Activated naive CD4-positive, alpha-beta T cell treated with anti-CD3 and anti-CD28 coated beads for 36 hours (primary cell): ENCODE measurements at regions of chr3 and their contacts with region 1.

Region 1: GRCh38 chr3:44338010-44338827 is at the start of gene TCAIM:
- DNase-seq: peak; percentile 98
- H3K4me3 Mint-ChIP-seq: peak within 1 kb of the TSS; percentile 99
- H3K27ac Mint-ChIP-seq: peak within 1 kb of the TSS; percentile 98
- H3K4me1 Mint-ChIP-seq: peaks cover 17% of the 10 kb centered on the region
- H3K27me3 Mint-ChIP-seq: no peaks in the 10 kb centered on the region
- total RNA-seq, gene TCAIM: 14.0 to 15.9 TPM

Region 2: GRCh38 chr3:43690400-43691119 is 647.7 kb before region 1 on chr3 and contains the start of gene ABHD5:
- CTCF ChIA-PET with region 1: no interaction called
- intact Hi-C with region 1: loop called (anchors 2 kb)
- DNase-seq: peak; percentile 85
- H3K4me3 Mint-ChIP-seq: peak within 1 kb of the TSS; percentile 83
- H3K27ac Mint-ChIP-seq: peak within 1 kb of the TSS; percentile 85
- H3K4me1 Mint-ChIP-seq: peaks cover 31% of the 10 kb centered on the region
- H3K27me3 Mint-ChIP-seq: no peaks in the 10 kb centered on the region
- total RNA-seq, gene ABHD5: 9.4 to 11.0 TPM

Region 3: DNA sequence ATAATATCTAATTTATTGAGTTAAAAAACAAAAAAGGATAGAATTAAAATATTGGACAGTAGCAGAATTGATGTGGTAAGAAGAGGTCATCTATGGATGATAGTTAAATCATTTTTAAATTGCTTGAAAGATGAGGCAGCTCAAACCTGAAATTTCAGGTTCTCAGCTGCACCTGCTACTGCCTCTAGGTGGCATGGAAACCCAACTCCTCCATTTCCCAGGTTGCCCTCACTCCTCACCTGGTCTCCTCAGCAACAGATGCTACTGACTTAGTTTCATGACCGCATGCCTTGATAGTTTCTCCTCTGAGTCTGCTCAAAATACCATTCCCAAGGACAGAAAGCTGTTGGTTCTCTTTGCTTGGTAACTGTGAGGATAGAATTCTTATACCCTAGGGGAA is 499.3 kb before region 1 on chr3:
- CTCF ChIA-PET with region 1: no interaction called
- intact Hi-C with region 1: no loop called
- DNase-seq: no peak
- H3K4me3 Mint-ChIP-seq: no peak overlapping the region
- H3K27ac Mint-ChIP-seq: no peak overlapping the region
- H3K4me1 Mint-ChIP-seq: no peaks in the 10 kb centered on the region
- H3K27me3 Mint-ChIP-seq: peaks cover 17% of the 10 kb centered on the region

Region 4: GRCh38 chr3:44375450-44375849 is 37.2 kb after region 1 on chr3:
- CTCF ChIA-PET with region 1: no interaction called
- intact Hi-C with region 1: no loop called
- DNase-seq: no peak
- H3K4me3 Mint-ChIP-seq: no peak overlapping the region
- H3K27ac Mint-ChIP-seq: no peak overlapping the region
- H3K4me1 Mint-ChIP-seq: no peaks in the 10 kb centered on the region
- H3K27me3 Mint-ChIP-seq: no peaks in the 10 kb centered on the region

Region 5: GRCh38 chr3:44439499-44440295 is 101.5 kb after region 1 on chr3:
- CTCF ChIA-PET with region 1: no interaction called
- intact Hi-C with region 1: loop called (anchors 1 kb)
- DNase-seq: peak; percentile 88
- H3K4me3 Mint-ChIP-seq: peak overlapping the region; percentile 57
- H3K27ac Mint-ChIP-seq: peak overlapping the region; percentile 94
- H3K4me1 Mint-ChIP-seq: peaks cover 42% of the 10 kb centered on the region
- H3K27me3 Mint-ChIP-seq: no peaks in the 10 kb centered on the region

Region 6: GRCh38 chr3:44510000-44510368 is 171.8 kb after region 1 on chr3:
- CTCF ChIA-PET with region 1: no interaction called
- intact Hi-C with region 1: loop called (anchors 1 kb)
- DNase-seq: peak; percentile 22
- H3K4me3 Mint-ChIP-seq: peak overlapping the region; percentile 92
- H3K27ac Mint-ChIP-seq: peak overlapping the region; percentile 93
- H3K4me1 Mint-ChIP-seq: peaks cover 28% of the 10 kb centered on the region
- H3K27me3 Mint-ChIP-seq: no peaks in the 10 kb centered on the region

Region 7: DNA sequence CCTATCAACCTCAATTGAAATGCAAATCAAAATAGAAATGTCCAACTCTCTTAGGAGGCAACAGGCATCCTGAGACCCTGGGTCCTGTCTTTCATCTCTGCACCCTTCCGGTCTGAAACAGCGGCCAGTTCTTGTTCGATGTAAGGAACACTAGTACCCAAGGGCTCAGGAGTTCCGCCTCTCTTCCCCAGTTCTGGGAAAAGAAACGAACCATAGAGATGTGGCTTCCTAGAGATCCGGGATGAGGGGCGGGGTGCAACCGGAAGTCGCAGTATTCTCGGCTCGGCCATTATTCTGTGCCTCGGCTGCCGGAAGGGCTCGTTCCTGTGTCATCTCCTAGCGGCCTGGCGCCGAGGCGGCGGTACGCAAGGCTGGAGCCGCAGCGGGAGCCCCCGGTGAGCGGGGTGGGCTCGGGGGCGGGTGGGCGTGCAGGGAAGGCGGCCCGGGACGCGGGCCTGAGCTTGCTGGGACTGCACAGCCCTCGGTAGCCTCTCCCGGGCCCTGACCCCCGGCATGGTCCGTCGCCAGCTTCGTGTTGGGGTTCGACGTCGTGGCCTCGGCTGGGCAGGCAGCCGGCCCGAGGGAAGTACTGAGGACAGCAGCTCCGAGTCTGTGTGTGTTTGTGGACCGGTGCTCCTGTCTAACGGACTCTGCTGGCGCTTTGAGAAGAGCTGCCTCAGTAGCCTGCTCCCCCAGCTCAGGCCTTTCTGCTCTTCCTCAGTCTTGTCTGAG is 286.7 kb after region 1 on chr3 and contains the start of gene ZNF197:
- CTCF ChIA-PET with region 1: no interaction called
- intact Hi-C with region 1: loop called (anchors 10 kb)
- DNase-seq: peak; percentile 77
- H3K4me3 Mint-ChIP-seq: peak within 1 kb of the TSS; percentile 88
- H3K27ac Mint-ChIP-seq: peak within 1 kb of the TSS; percentile 79
- H3K4me1 Mint-ChIP-seq: peaks cover 28% of the 10 kb centered on the region
- H3K27me3 Mint-ChIP-seq: no peaks in the 10 kb centered on the region
- total RNA-seq, gene ZNF197: 7.7 to 8.4 TPM

Region 8: DNA sequence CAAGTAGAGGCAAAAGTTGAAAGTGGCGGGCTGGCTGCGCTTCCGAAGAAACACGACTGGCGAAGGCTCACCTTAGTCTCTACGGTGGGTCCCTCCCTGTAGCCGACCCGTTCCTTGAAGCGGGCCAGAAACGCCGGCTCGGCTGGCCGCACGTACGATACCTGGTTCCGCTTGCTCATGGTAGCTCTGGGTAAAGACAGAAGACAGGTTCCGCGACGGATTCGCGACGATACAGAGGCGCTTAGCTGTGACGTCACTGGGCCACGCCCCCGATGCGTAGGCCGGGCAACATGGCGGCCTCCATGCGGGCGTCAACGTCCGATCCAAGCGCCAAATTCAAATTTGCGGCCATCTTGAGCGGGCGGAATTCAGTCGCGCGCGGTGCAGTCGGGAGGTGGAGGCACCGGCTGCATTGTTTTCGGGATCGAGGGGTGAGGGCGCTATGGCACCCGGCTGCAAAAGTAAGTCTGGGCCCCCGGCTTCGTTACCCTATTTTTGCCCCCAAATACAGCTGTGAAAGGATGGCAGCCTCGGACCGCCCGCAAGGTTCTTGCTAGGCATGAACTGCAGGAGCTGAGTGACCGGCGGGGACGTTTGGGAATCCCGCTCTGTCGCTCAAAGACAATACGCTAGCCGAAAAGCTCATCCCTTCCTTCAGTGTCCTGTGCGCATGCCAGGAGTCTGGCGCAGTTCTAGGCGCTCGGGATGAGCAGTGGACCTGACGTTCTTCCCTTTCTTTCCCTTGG is 423.4 kb after region 1 on chr3 and contains the starts of genes KIAA1143 and KIF15:
- CTCF ChIA-PET with region 1: no interaction called
- intact Hi-C with region 1: loop called (anchors 1 kb)
- DNase-seq: peak; percentile 99
- H3K4me3 Mint-ChIP-seq: peak within 1 kb of the TSS; percentile 94
- H3K27ac Mint-ChIP-seq: peak within 1 kb of the TSS; percentile 86
- H3K4me1 Mint-ChIP-seq: peaks cover 26% of the 10 kb centered on the region
- H3K27me3 Mint-ChIP-seq: no peaks in the 10 kb centered on the region
- total RNA-seq, gene KIAA1143: 29.1 to 35.9 TPM
- total RNA-seq, gene KIF15: 42.1 to 45.8 TPM

Region 9: GRCh38 chr3:44976002-44976815 is 638.0 kb after region 1 on chr3 and contains the starts of genes EXOSC7 and ZDHHC3:
- CTCF ChIA-PET with region 1: no interaction called
- intact Hi-C with region 1: loop called (anchors 1 kb)
- DNase-seq: peak; percentile 87
- H3K4me3 Mint-ChIP-seq: peak within 1 kb of the TSS; percentile 96
- H3K27ac Mint-ChIP-seq: peak within 1 kb of the TSS; percentile 84
- H3K4me1 Mint-ChIP-seq: peaks cover 59% of the 10 kb centered on the region
- H3K27me3 Mint-ChIP-seq: no peaks in the 10 kb centered on the region
- total RNA-seq, gene EXOSC7: 61.4 to 64.7 TPM
- total RNA-seq, gene ZDHHC3: 29.5 to 31.0 TPM